ENCODE measurements at regions of chr16 and their contacts with region 1.

Region 1: DNA sequence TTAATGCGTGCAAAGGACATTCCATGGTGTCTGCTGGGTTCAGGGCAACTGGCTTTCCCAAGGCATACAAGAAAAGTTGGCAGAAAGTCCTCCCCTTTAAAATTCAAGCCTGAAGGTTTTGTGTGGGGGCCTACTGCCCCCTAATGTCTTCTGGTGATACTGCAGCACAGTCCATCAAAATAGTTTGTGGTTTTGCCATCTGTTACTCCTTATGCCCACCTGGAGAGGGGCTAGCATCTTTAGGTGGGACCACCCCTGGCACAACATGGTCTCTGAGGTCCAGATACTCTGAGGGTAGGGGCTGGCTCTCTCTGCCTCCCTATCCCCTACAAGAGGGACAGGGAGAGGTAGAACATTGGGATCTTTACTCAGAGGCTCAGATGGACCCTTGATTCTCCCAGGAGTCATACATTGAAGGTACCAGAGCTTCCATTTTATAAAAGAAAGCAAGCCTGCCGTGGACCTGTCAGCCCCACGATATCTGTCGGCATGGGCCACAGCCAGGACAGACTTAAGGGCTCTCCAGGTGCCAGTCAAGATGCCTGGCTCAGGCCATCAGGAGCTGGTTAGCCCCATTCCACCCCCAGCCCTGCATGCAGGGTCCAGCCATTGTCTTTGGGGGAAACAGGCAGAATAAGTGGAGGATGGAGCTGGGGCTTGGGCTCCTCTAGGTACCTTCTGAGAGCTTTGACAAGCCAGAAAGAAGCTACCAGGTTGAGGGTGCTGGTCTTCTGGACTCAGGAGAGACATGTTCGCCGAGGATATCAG is 6.3 kb downstream of the ESRP2 start:
- DNase-seq: peak; percentile 59 to 65 (median 62)
- ATAC-seq: peak; percentile 58
- H3K4me3 ChIP-seq: no peak overlapping the region
- H3K27ac ChIP-seq: no peak overlapping the region
- H3K4me1 ChIP-seq: peaks cover 0 to 12% of the 10 kb centered on the region in 2 experiments; a peak in 1 of 5 replicates
- H3K27me3 ChIP-seq: no peaks in the 10 kb centered on the region
- CTCF ChIP-seq: peak; percentile 73 to 88 (median 87)
- EP300 ChIP-seq: no peak
- POLR2A ChIP-seq: no peak
- RAD21 ChIP-seq: peak; percentile 71 to 74

Region 2: DNA sequence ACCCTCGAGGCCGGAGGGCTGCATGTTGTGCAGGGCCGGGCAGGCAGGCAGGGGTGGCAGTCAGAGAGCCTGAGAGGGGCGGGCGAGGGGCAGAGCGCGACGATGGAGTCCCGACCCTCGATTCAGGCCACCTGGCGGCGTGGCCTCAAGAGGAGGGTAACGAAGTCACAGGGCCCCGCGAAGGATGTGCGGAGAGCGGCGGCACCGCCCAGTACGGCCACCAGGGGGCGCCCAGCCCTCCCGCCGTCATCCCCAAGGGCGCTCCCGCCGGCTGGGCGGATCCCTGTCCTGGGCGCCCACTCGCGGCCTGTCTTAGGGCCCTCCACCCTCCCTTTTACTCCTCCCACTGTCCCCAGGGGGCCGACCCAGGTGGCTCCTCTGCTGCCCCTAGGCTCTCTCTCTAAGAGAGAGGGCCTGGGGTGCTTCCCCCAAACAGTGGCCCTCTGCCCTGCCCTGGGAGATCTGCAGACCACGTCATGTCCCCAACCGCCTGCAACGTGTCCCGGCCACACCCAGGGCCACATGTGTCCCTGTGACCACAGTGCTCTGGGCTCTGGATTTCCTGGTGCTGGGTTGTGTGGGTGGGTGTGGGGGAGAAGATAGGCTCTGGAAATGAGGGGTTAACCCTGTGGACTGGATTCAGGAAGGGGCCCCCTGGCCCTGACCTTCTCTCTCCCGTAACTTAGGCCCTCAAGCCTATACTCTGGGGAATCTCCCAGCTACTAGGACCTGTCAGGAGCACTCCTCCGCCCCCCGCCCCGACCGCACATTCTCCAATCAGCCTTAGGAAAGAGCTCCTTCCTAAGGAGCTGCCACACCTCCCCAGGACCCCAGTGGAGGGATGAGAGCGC is 236.2 kb before region 1 on chr16:
- CTCF ChIA-PET with region 1: interaction called, 18 read pairs
- POLR2A ChIA-PET with region 1: no interaction called
- in situ Hi-C with region 1: no loop called
- intact Hi-C with region 1: loop called (anchors 1 kb)
- DNase-seq: peak; percentile 92 to 96 (median 94)
- ATAC-seq: peak; percentile 95
- H3K4me3 ChIP-seq: 0 out of 2 replicates have a peak overlapping the region, but pooled peaks have one; percentile 3
- H3K27ac ChIP-seq: peak overlapping the region; percentile 89
- H3K4me1 ChIP-seq: peaks cover 15 to 36% of the 10 kb centered on the region in 2 experiments
- H3K27me3 ChIP-seq: no peaks in the 10 kb centered on the region
- CTCF ChIP-seq: peak; percentile 93 to 98 (median 97)
- EP300 ChIP-seq: peak; percentile 29; the same call in 1 of the 2 replicates
- POLR2A ChIP-seq: peak; percentile 82
- RAD21 ChIP-seq: peak; percentile 88 to 89

Region 3: GRCh38 chr16:68093816-68094613 is 135.6 kb before region 1 on chr16:
- CTCF ChIA-PET with region 1: interaction called, 4 read pairs
- POLR2A ChIA-PET with region 1: no interaction called
- in situ Hi-C with region 1: no loop called
- intact Hi-C with region 1: loop called (anchors 2 kb)
- DNase-seq: peak in 3 of 4 experiments; percentile 26 to 59 (median 31)
- ATAC-seq: peak; percentile 77
- H3K4me3 ChIP-seq: no peak overlapping the region
- H3K27ac ChIP-seq: peak overlapping the region; percentile 33; the same call in 2 of the 3 replicates
- H3K4me1 ChIP-seq: peaks cover 14 to 35% of the 10 kb centered on the region in 2 experiments; a peak in 4 of 5 replicates
- H3K27me3 ChIP-seq: no peaks in the 10 kb centered on the region
- CTCF ChIP-seq: peak; percentile 66 to 75 (median 71)
- EP300 ChIP-seq: no peak
- POLR2A ChIP-seq: no peak
- RAD21 ChIP-seq: peak; percentile 50 to 68; a peak in 3 of 4 replicates

Region 4: DNA sequence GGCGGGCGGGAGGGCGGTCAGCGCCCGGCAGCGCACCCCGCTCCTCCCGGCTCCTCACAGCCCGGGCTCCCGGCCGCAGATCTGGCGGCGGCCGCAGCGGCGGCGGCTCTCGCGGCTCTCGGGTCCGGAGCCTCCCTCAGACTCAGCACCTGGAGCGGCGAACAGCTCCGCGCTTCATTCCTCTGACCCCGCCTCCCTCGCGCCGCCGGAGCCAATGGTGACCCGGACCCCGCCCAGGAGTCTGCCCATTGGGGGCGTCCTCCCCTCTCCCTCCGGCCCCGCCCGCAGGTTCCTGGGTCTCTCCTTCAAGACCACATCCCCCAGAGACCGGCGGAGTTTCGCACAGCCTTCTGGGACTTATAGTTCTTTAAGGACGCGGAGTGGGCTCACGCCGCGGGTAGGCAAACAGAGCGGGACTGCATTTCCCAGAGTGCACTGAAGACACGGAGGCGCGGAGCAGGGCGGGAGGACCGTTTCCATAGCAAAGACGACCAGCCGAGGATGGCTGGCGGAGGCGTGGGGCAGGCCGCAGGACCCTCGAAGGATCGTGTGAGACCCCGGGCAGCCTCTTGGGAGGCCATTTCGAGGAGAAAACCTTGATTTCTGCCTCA is 218.8 kb after region 1 on chr16 and contains the start of gene SMPD3:
- CTCF ChIA-PET with region 1: no interaction called
- POLR2A ChIA-PET with region 1: no interaction called
- in situ Hi-C with region 1: no loop called
- intact Hi-C with region 1: no loop called
- DNase-seq: peak; percentile 90 to 96 (median 92)
- ATAC-seq: peak; percentile 98
- H3K4me3 ChIP-seq: peak within 1 kb of the TSS; percentile 13; the same call in 1 of the 2 replicates
- H3K27ac ChIP-seq: no peak within 1 kb of the TSS
- H3K4me1 ChIP-seq: peaks cover 2 to 22% of the 10 kb centered on the region in 2 experiments; a peak in 2 of 5 replicates
- H3K27me3 ChIP-seq: 0 out of 5 replicates have a peak, but pooled peaks cover 0 to 5% of the 10 kb centered on the region in 2 experiments
- CTCF ChIP-seq: no peak
- EP300 ChIP-seq: no peak
- POLR2A ChIP-seq: no peak
- RAD21 ChIP-seq: no peak
- polyA plus RNA-seq, gene SMPD3: 0.03 to 0.08 TPM